Heart right ventricle (tissue), 16 donors: ENCODE measurements at regions of chr20 and their contacts with region 1.

Region 1: DNA sequence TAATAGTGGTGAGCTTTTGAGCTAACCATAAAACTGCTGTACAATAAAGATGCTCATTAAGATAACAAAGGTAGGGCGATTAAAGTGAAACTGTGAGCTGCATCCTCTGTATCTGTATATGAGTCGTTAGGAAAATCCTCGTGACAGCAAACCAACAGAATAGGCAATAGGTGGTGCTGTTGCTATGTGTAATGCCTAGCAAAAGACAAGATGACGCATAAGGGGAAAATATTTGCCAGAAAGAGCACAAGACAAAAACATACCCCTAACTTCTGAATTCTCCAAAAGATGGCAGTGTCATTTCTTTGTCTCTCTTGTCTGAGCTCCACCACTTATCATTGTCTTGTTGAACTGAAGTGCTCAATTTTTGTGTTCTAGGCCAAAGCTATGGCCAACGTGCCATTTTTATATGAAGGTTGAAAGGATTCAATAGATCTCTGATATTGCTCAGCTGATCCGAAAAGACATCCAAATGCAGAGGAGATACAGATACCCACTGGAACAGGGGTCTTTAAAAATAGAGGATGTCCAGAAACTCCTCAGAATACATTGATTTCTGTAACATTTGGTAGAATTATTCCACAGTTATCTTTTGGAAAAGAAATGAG is 56.3 kb upstream of the ANKEF1 start:
- DNase-seq: peak in 1 of 2 donors; percentile 64
- ATAC-seq: peak in 7 of 8 donors; percentile 80 to 93 (median 83)
- H3K4me3 ChIP-seq: no peak overlapping the region
- H3K27ac ChIP-seq: no peak overlapping the region
- H3K4me1 ChIP-seq: peaks cover 0 to 6% (median 0%) of the 10 kb centered on the region in 9 donors
- H3K27me3 ChIP-seq: peaks cover 0 to 7% (median 0%) of the 10 kb centered on the region in 7 donors
- CTCF ChIP-seq: peak; percentile 53 to 94 (median 79)

Region 2: GRCh38 chr20:10090588-10091166 is 112.2 kb after region 1 on chr20:
- intact Hi-C with region 1: loop called (anchors 1 to 10 kb)
- DNase-seq: peak; percentile 19 to 46
- ATAC-seq: peak; percentile 55 to 80 (median 74)
- H3K4me3 ChIP-seq: no peak overlapping the region
- H3K27ac ChIP-seq: no peak overlapping the region
- H3K4me1 ChIP-seq: no peaks in the 10 kb centered on the region
- H3K27me3 ChIP-seq: peaks cover 0 to 3% (median 0%) of the 10 kb centered on the region in 7 donors
- CTCF ChIP-seq: peak; percentile 41 to 84 (median 77)

Region 3: DNA sequence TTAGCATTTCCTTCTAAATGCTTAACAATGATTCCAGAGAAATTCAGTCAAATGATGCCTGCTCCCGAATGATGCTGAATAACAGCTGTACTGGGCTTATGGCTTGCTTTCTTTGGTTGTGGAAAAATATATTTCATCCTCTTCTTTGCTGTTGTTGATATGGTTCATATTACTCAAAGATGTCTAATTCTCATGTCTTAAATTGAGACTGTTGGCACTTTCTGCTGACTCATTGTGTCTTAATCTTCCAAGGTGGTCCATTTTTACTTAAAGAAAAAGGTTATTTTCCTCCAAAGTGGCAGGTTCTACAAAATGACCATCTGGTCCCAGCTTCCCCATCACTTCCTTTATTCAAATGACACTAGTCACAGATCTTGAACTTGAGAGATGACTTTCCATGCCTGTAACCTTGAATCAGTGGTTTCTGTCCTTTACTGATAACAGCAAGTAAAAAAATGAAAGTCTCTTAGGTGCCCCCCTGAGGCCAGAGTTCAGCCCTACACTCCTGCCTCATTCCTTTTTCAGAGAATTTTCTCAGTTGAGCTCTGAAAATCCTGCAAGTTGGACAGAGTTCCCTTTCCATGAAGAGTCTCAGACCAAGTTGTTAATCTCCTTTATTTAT is 247.0 kb after region 1 on chr20:
- intact Hi-C with region 1: loop called in 1 of 10 experiments (anchors 10 kb)
- DNase-seq: no peak
- ATAC-seq: no peak
- H3K4me3 ChIP-seq: no peak overlapping the region
- H3K27ac ChIP-seq: no peak overlapping the region
- H3K4me1 ChIP-seq: no peaks in the 10 kb centered on the region
- H3K27me3 ChIP-seq: peaks cover 0 to 25% (median 10%) of the 10 kb centered on the region in 7 donors
- CTCF ChIP-seq: no peak

Region 4: GRCh38 chr20:10427060-10427692 is 448.7 kb after region 1 on chr20:
- intact Hi-C with region 1: loop called (anchors 2 to 10 kb)
- DNase-seq: peak; percentile 39 to 46
- ATAC-seq: peak in 4 of 8 donors; percentile 50 to 64 (median 57)
- H3K4me3 ChIP-seq: no peak overlapping the region
- H3K27ac ChIP-seq: no peak overlapping the region
- H3K4me1 ChIP-seq: peaks cover 0 to 71% (median 34%) of the 10 kb centered on the region in 9 donors
- H3K27me3 ChIP-seq: no peaks in the 10 kb centered on the region
- CTCF ChIP-seq: peak; percentile 52 to 87 (median 76)

Region 5: DNA sequence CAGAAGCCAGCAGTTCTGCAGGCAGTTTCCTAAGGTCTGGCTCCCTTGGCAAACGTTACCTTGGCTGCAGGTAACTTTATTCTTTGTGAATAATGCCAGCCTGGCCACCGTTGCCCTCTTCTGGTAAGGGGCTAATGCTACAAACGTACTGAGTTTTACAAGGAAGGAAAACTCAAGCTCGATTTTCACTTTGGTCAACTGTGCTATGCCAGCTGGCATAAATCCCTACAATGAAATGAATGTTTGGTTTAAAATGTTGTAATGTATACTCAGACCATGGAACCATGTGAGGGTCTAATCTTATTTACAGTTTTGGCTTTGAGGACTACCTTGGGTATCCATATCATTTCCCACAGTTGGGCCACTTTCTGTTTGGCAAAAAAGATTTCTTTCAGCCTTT is 558.0 kb after region 1 on chr20:
- intact Hi-C with region 1: loop called in 1 of 10 experiments (anchors 10 kb)
- DNase-seq: no peak
- ATAC-seq: no peak
- H3K4me3 ChIP-seq: no peak overlapping the region
- H3K27ac ChIP-seq: no peak overlapping the region
- H3K4me1 ChIP-seq: peaks cover 0 to 14% (median 9%) of the 10 kb centered on the region in 9 donors
- H3K27me3 ChIP-seq: no peaks in the 10 kb centered on the region
- CTCF ChIP-seq: peak in 7 of 9 donors; percentile 14 to 45 (median 29)

Region 6: GRCh38 chr20:11549172-11550103 is 1570.9 kb after region 1 on chr20:
- intact Hi-C with region 1: loop called in 9 of 10 experiments (anchors 2 to 10 kb)
- DNase-seq: no peak
- ATAC-seq: no peak
- H3K4me3 ChIP-seq: no peak overlapping the region
- H3K27ac ChIP-seq: no peak overlapping the region
- H3K4me1 ChIP-seq: peaks cover 0 to under 1% (median 0%) of the 10 kb centered on the region in 9 donors
- H3K27me3 ChIP-seq: peaks cover 0 to 6% (median 0%) of the 10 kb centered on the region in 7 donors
- CTCF ChIP-seq: no peak